ENCODE measurements at regions of chr6 and their contacts with region 1.

Region 1: GRCh38 chr6:53348371-53349208 is at the start of gene ELOVL5:
- DNase-seq: peak; percentile 96
- H3K4me3 ChIP-seq: peak within 1 kb of the TSS; percentile 81 to 92 (median 85)
- H3K27ac ChIP-seq: peak within 1 kb of the TSS; percentile 74
- H3K4me1 ChIP-seq: peaks cover 7% of the 10 kb centered on the region
- H3K27me3 ChIP-seq: no peaks in the 10 kb centered on the region
- CTCF ChIP-seq: no peak
- total RNA-seq, gene ELOVL5: 50.8 to 71.1 TPM

Region 2: GRCh38 chr6:53090576-53090975 is 258.0 kb before region 1 on chr6:
- CTCF ChIA-PET with region 1: no interaction called
- dilution Hi-C with region 1: no loop called
- in situ Hi-C with region 1: no loop called
- intact Hi-C with region 1: no loop called
- DNase-seq: peak; percentile 22
- H3K4me3 ChIP-seq: no peak overlapping the region
- H3K27ac ChIP-seq: no peak overlapping the region
- H3K4me1 ChIP-seq: peaks cover 3% of the 10 kb centered on the region
- H3K27me3 ChIP-seq: no peaks in the 10 kb centered on the region
- CTCF ChIP-seq: no peak

Region 3: DNA sequence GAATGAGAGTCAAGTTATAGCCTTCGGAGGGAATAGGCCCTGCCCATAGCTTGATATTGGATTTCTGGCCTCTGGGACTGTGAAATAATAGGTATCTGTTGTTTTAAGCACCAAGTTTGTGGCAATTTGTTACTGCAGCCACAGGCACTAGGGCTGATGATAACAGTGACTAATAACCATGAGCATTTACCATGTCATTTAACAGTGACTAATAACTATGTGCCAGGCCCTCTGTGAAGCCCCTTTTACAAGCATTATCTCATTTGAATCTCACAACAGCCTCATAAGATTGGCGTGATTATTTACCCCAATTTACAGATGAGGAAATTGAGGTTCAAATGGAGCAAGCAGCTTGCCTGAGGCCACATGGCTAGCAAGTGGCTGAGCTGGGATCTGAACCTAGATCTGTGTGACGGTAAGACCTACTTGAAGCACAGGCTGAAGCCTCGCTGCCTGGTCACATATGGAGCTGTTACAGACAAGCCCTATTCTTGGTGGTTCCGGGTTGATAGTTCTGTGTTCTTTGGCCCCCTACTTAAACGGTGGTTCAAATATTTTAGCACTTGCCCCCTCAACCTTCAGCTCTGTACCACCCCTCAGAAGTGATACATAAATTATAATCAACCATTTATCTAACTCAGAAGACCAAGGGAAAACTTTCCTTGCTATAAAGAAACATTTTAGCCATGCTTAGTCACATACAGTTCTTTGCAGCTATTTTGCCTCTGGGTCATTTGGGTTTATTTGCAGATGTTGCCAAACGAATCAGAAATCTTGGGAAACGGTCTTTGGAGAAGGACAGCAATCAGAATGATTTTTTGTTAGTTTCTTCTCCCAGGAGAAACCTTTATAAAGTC is 98.2 kb before region 1 on chr6:
- CTCF ChIA-PET with region 1: no interaction called
- dilution Hi-C with region 1: no loop called
- in situ Hi-C with region 1: no loop called
- intact Hi-C with region 1: no loop called
- DNase-seq: peak; percentile 66
- H3K4me3 ChIP-seq: no peak overlapping the region
- H3K27ac ChIP-seq: no peak overlapping the region
- H3K4me1 ChIP-seq: peaks cover 12% of the 10 kb centered on the region
- H3K27me3 ChIP-seq: no peaks in the 10 kb centered on the region
- CTCF ChIP-seq: no peak

Region 4: GRCh38 chr6:53302678-53303360 is 45.8 kb before region 1 on chr6:
- CTCF ChIA-PET with region 1: no interaction called
- dilution Hi-C with region 1: no loop called
- in situ Hi-C with region 1: no loop called
- intact Hi-C with region 1: loop called (anchors 2 kb)
- DNase-seq: peak; percentile 84
- H3K4me3 ChIP-seq: peak overlapping the region in 1 of 3 experiments; percentile 17
- H3K27ac ChIP-seq: peak overlapping the region; percentile 98
- H3K4me1 ChIP-seq: peaks cover 50% of the 10 kb centered on the region
- H3K27me3 ChIP-seq: no peaks in the 10 kb centered on the region
- CTCF ChIP-seq: no peak

Region 5: DNA sequence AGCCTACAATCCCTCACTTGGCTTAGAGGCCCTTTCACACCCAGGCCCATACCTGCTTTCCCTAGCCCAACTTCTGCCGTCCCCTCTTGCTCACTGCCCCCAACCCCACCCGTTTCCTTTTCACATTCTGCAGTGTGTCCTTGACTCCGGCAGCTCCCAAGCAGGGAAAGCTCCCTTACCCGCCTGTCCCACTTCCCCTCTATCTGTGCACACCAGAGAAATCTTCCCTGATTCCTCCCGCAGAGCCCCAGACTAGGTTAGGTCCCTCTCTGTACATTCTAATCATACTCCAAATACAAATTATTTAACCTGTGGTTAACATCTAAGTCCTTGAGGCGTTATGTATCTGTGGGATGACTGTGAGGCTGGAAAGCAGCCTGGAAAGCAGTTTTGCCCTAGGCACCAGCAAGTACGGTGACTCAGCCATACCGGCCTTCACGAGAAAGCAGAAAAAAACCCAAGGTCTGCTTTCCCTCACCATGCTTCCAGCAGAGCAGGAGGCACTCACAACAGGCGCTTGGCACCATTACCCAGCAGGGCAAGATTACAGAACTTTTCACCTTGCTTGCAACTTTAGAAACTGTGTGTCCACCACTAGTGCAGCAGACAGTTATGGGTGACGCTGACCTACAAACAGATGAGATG is 22.1 kb before region 1 on chr6:
- CTCF ChIA-PET with region 1: no interaction called
- dilution Hi-C with region 1: no loop called
- in situ Hi-C with region 1: no loop called
- intact Hi-C with region 1: loop called (anchors 1 kb)
- DNase-seq: peak; percentile 97
- H3K4me3 ChIP-seq: no peak overlapping the region
- H3K27ac ChIP-seq: peak overlapping the region; percentile 64
- H3K4me1 ChIP-seq: peaks cover 51% of the 10 kb centered on the region
- H3K27me3 ChIP-seq: no peaks in the 10 kb centered on the region
- CTCF ChIP-seq: no peak

Region 6: GRCh38 chr6:53437557-53438202 is 89.1 kb after region 1 on chr6:
- CTCF ChIA-PET with region 1: no interaction called
- dilution Hi-C with region 1: no loop called
- in situ Hi-C with region 1: no loop called
- intact Hi-C with region 1: loop called (anchors 5 kb)
- DNase-seq: peak; percentile 75
- H3K4me3 ChIP-seq: no peak overlapping the region
- H3K27ac ChIP-seq: no peak overlapping the region
- H3K4me1 ChIP-seq: peaks cover 2% of the 10 kb centered on the region
- H3K27me3 ChIP-seq: no peaks in the 10 kb centered on the region
- CTCF ChIP-seq: peak; percentile 67 to 74